ENCODE measurements at regions of chr14 and their contacts with region 1.

Region 1: DNA sequence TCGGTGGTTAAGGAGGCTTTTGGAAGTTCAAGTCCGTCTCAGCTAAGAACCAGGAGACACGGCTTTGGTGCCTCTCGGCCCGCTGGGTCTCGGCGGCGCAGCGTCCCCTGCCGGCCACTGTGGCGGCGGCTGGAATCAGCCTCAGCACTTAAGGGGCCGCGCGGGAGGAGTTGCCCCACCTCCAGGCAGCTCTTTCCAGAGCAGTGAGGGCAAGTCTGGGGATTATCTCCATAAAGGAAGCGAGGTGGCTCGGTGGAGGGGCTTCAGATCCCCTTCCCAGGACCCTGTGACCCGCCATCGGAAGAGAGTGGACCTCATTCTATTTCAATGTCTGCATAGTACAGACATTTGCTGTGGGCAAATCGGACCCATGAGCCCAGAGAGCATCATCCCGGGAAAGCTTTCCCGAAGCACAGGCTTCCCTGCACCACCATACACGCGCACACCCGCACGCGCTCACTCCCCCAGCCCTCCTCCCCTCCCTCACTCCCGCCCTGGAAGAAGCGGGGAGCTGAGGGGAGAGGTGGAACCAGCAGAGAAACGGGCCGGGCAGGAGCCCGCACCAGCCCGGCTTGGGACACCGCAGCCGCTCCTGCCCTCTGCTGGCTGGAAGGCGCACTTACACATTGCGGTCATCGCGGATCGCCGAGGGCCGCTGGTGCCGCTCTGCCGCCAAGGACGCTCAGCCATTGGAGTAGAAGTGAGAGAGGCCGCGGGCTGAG is 15.9 kb downstream of the RNASE2 start:
- DNase-seq: peak; percentile 48 to 87 (median 75)
- ATAC-seq: peak; percentile 91
- H3K4me3 ChIP-seq: peak overlapping the region; percentile 80 to 85
- H3K4me3 Mint-ChIP-seq: peak overlapping the region; percentile 92
- H3K27ac ChIP-seq: no peak overlapping the region
- H3K27ac Mint-ChIP-seq: no peak overlapping the region
- H3K4me1 ChIP-seq: peaks cover 11% of the 10 kb centered on the region
- H3K4me1 Mint-ChIP-seq: peaks cover 10% of the 10 kb centered on the region
- H3K27me3 ChIP-seq: peaks cover 0 to 3% of the 10 kb centered on the region in 2 experiments
- H3K27me3 Mint-ChIP-seq: peaks cover 24% of the 10 kb centered on the region
- CTCF ChIP-seq: peak; percentile 92

Region 2: DNA sequence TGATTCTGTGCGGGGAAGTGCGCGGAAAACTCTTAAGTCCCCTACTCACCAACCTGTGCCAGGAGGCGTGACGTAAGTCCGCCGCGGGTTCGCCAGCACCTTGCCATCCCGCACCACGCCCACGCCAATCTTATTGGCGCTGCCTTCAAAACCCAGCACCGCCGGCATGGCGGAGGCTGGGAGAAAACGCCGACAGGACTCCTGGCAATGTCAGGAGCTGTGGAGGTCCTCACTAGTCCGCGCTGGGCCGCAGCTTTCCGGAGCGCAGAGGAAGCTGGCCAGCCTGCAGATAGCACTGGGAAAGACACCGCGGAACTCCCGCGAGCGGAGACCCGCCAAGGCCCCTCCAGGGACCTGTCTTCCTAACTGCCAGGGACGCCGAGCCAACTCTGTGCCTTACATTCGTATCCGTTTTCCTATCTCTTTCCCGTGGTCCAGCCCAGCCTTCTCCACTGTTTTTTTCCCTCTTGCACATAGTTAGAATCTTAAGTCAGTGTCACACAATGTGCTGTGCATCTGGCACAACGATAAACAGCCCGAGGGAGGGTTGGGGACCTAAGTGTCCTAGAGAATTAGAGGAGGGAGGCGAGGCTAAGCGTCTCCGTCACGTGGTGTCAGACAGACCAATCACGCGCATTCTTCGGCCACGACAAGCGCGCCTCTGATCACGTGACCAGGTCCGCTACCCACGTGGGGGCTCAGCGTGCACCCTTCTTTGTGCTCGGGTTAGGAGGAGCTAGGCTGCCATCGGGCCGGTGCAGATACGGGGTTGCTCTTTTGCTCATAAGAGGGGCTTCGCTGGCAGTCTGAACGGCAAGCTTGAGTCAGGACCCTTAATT is 516.4 kb before region 1 on chr14 and contains the starts of genes APEX1 and OSGEP:
- CTCF ChIA-PET with region 1: no interaction called
- POLR2A ChIA-PET with region 1: no interaction called
- intact Hi-C with region 1: loop called in 1 of 2 experiments (anchors 5 kb)
- DNase-seq: peak; percentile 96 to 100 (median 97)
- ATAC-seq: peak; percentile 80
- H3K4me3 ChIP-seq: peak within 1 kb of the TSS; percentile 73 to 82
- H3K4me3 Mint-ChIP-seq: no peak within 1 kb of the TSS
- H3K27ac ChIP-seq: peak within 1 kb of the TSS; percentile 89 to 96
- H3K27ac Mint-ChIP-seq: no peak within 1 kb of the TSS
- H3K4me1 ChIP-seq: peaks cover 32% of the 10 kb centered on the region
- H3K4me1 Mint-ChIP-seq: peaks cover 22% of the 10 kb centered on the region
- H3K27me3 ChIP-seq: no peaks in the 10 kb centered on the region
- H3K27me3 Mint-ChIP-seq: no peaks in the 10 kb centered on the region
- CTCF ChIP-seq: no peak
- total RNA-seq, gene APEX1: 120 to 123 TPM
- total RNA-seq, gene OSGEP: 40.7 to 47.4 TPM

Region 3: DNA sequence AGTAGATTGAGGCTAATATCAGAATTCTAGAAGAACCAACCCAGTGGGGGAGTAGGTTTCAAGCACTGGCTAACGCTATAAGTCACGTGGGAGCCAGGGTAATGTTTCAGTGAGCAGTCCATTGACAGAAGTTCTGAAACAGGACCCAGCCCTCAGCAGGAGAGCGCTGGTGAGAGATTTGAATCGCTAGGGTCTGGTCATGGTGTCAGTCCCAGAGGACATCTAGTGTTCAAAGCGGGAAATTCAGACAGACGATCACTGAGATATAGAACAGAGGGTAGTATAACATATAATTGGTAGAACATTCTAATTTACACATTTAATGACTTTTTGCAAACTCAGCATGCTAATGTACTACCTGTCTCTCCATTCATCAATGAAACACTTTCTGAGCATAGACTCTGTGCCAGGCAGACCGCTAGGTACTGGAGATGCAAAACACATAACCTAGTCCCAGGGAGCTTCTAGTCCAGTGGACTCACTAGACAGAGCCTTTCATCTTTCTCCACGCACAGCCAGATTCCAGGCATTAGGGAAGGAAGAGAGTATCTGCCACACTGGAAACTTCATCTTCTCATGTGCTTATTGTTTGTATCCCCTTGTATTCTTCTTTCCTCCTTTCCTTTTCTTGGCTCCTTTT is 115.4 kb before region 1 on chr14:
- CTCF ChIA-PET with region 1: interaction called, 40 read pairs
- POLR2A ChIA-PET with region 1: interaction called, 3 read pairs
- intact Hi-C with region 1: loop called (anchors 1 kb)
- DNase-seq: peak in 6 of 9 experiments; percentile 13 to 70 (median 28)
- ATAC-seq: peak; percentile 79
- H3K4me3 ChIP-seq: no peak overlapping the region
- H3K4me3 Mint-ChIP-seq: no peak overlapping the region
- H3K27ac ChIP-seq: no peak overlapping the region
- H3K27ac Mint-ChIP-seq: no peak overlapping the region
- H3K4me1 ChIP-seq: no peaks in the 10 kb centered on the region
- H3K4me1 Mint-ChIP-seq: peaks cover 5% of the 10 kb centered on the region
- H3K27me3 ChIP-seq: no peaks in the 10 kb centered on the region
- H3K27me3 Mint-ChIP-seq: peaks cover 22% of the 10 kb centered on the region
- CTCF ChIP-seq: peak; percentile 50

Region 4: GRCh38 chr14:20956376-20956976 is 14.7 kb before region 1 on chr14:
- CTCF ChIA-PET with region 1: interaction called, 23 read pairs
- POLR2A ChIA-PET with region 1: interaction called, 4 read pairs
- intact Hi-C with region 1: loop called in 1 of 2 experiments (anchors 1 kb)
- DNase-seq: no peak
- ATAC-seq: no peak
- H3K4me3 ChIP-seq: no peak overlapping the region
- H3K4me3 Mint-ChIP-seq: no peak overlapping the region
- H3K27ac ChIP-seq: no peak overlapping the region
- H3K27ac Mint-ChIP-seq: no peak overlapping the region
- H3K4me1 ChIP-seq: no peaks in the 10 kb centered on the region
- H3K4me1 Mint-ChIP-seq: peaks cover 15% of the 10 kb centered on the region
- H3K27me3 ChIP-seq: no peaks in the 10 kb centered on the region
- H3K27me3 Mint-ChIP-seq: peaks cover 15% of the 10 kb centered on the region
- CTCF ChIP-seq: no peak

Region 5: GRCh38 chr14:20989572-20990551 is 18.7 kb after region 1 on chr14 and contains the start of gene METTL17:
- CTCF ChIA-PET with region 1: interaction called, 12 read pairs
- POLR2A ChIA-PET with region 1: interaction called, 3 read pairs
- intact Hi-C with region 1: loop called in 1 of 2 experiments (anchors 1 kb)
- DNase-seq: peak; percentile 65 to 94 (median 85)
- ATAC-seq: peak; percentile 92
- H3K4me3 ChIP-seq: peak within 1 kb of the TSS; percentile 92 to 96
- H3K4me3 Mint-ChIP-seq: peak within 1 kb of the TSS; percentile 95
- H3K27ac ChIP-seq: peak within 1 kb of the TSS; percentile 65 to 73
- H3K27ac Mint-ChIP-seq: peak within 1 kb of the TSS; percentile 94
- H3K4me1 ChIP-seq: peaks cover 18% of the 10 kb centered on the region
- H3K4me1 Mint-ChIP-seq: peaks cover 28% of the 10 kb centered on the region
- H3K27me3 ChIP-seq: no peaks in the 10 kb centered on the region
- H3K27me3 Mint-ChIP-seq: no peaks in the 10 kb centered on the region
- CTCF ChIP-seq: peak; percentile 28
- total RNA-seq, gene METTL17: 82.3 to 88.8 TPM

Region 6: GRCh38 chr14:21014761-21015190 is 43.6 kb after region 1 on chr14:
- CTCF ChIA-PET with region 1: interaction called, 14 read pairs
- POLR2A ChIA-PET with region 1: no interaction called
- intact Hi-C with region 1: no loop called
- DNase-seq: peak; percentile 61 to 90 (median 84)
- ATAC-seq: peak; percentile 78
- H3K4me3 ChIP-seq: no peak overlapping the region
- H3K4me3 Mint-ChIP-seq: no peak overlapping the region
- H3K27ac ChIP-seq: no peak overlapping the region
- H3K27ac Mint-ChIP-seq: no peak overlapping the region
- H3K4me1 ChIP-seq: no peaks in the 10 kb centered on the region
- H3K4me1 Mint-ChIP-seq: no peaks in the 10 kb centered on the region
- H3K27me3 ChIP-seq: peaks cover 0 to 4% of the 10 kb centered on the region in 2 experiments
- H3K27me3 Mint-ChIP-seq: peaks cover 13% of the 10 kb centered on the region
- CTCF ChIP-seq: peak; percentile 79

Region 7: GRCh38 chr14:21326972-21327371 is 355.8 kb after region 1 on chr14:
- CTCF ChIA-PET with region 1: no interaction called
- POLR2A ChIA-PET with region 1: no interaction called
- intact Hi-C with region 1: no loop called
- DNase-seq: no peak
- ATAC-seq: no peak
- H3K4me3 ChIP-seq: no peak overlapping the region
- H3K4me3 Mint-ChIP-seq: no peak overlapping the region
- H3K27ac ChIP-seq: no peak overlapping the region
- H3K27ac Mint-ChIP-seq: no peak overlapping the region
- H3K4me1 ChIP-seq: no peaks in the 10 kb centered on the region
- H3K4me1 Mint-ChIP-seq: no peaks in the 10 kb centered on the region
- H3K27me3 ChIP-seq: no peaks in the 10 kb centered on the region
- H3K27me3 Mint-ChIP-seq: peaks cover 8% of the 10 kb centered on the region
- CTCF ChIP-seq: no peak

Region 8: DNA sequence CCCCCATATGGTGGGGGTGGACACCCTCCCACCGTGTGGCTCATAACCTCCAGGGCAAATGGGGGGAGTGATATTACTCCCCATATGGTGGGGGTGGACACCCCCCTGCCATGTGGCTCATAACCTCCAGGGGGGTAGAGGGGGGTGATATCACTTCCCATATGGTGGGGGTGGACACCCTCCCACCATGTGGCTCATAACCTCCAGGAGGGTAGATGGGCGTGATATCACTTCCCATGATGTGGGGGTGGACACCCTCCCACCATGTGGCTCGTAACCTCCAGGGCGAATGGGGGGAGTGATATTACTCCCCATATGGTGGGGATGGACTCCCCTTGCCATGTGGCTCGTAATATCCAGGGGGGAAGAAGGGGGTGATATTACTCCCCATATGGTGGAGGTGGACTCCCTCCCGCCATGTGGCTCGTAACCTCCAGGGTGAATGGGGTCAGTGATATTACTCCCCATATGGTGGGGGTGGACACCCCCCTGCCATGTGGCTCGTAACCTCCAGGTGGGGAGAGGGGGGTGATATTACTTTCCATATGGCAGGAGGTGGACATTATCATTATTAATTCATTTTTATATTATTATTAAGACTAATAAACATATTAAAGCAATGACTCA is 1744.2 kb after region 1 on chr14:
- CTCF ChIA-PET with region 1: no interaction called
- POLR2A ChIA-PET with region 1: no interaction called
- intact Hi-C with region 1: no loop called
- DNase-seq: no peak
- ATAC-seq: no peak
- H3K4me3 ChIP-seq: no peak overlapping the region
- H3K4me3 Mint-ChIP-seq: no peak overlapping the region
- H3K27ac ChIP-seq: no peak overlapping the region
- H3K27ac Mint-ChIP-seq: no peak overlapping the region
- H3K4me1 ChIP-seq: peaks cover 9% of the 10 kb centered on the region
- H3K4me1 Mint-ChIP-seq: peaks cover 11% of the 10 kb centered on the region
- H3K27me3 ChIP-seq: peaks cover 0 to 7% of the 10 kb centered on the region in 2 experiments
- H3K27me3 Mint-ChIP-seq: peaks cover 21% of the 10 kb centered on the region
- CTCF ChIP-seq: no peak

Region 9: DNA sequence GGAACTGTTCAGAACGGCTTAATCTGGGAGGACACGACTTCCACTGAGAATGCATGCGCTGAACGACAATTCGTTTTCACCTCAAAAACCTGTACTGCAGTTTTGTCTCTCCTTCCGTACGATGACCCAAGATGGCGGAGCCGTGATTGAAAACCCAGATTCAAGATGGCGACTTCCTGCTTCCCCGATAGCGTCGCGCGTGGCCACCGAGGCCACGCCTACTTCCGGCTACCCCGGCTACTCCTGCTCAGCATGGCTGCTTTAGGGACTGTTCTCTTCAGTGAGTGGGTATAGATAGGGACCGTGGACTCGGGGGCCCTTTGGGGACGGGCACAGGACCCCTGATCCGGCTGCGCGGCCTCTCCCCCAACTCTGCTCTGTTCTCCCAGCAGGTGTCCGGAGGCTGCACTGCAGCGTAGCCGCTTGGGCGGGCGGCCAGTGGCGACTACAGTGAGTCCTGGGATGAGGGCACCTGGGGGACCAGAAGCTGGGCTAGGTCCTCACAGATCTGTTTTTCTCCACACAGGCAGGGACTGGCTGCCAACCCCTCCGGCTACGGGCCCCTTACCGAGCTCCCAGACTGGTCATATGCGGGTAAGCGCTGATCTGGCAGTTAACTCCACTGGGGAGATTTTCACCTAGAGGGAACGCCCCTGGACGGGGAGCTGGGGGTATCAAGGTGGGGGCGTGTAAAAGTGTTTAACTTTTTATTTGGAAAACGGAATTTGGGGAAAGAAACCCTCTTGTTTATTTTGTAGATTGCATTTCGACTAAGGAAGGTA is 1858.7 kb after region 1 on chr14 and contains the start of gene MRPL52:
- CTCF ChIA-PET with region 1: no interaction called
- POLR2A ChIA-PET with region 1: no interaction called
- intact Hi-C with region 1: no loop called
- DNase-seq: peak; percentile 81 to 97 (median 90)
- ATAC-seq: peak; percentile 95
- H3K4me3 ChIP-seq: peak within 1 kb of the TSS; percentile 89 to 91
- H3K4me3 Mint-ChIP-seq: peak within 1 kb of the TSS; percentile 92
- H3K27ac ChIP-seq: peak within 1 kb of the TSS; percentile 69 to 90
- H3K27ac Mint-ChIP-seq: peak within 1 kb of the TSS; percentile 96
- H3K4me1 ChIP-seq: peaks cover 13% of the 10 kb centered on the region
- H3K4me1 Mint-ChIP-seq: peaks cover 31% of the 10 kb centered on the region
- H3K27me3 ChIP-seq: peaks cover 0 to 5% of the 10 kb centered on the region in 2 experiments
- H3K27me3 Mint-ChIP-seq: peaks cover 7% of the 10 kb centered on the region
- CTCF ChIP-seq: no peak
- total RNA-seq, gene MRPL52: 22.3 to 25.7 TPM

Measured in CD8-positive, alpha-beta T cell (primary cell).